ENCODE measurements at regions of chr3 and their contacts with region 1.

Region 1: DNA sequence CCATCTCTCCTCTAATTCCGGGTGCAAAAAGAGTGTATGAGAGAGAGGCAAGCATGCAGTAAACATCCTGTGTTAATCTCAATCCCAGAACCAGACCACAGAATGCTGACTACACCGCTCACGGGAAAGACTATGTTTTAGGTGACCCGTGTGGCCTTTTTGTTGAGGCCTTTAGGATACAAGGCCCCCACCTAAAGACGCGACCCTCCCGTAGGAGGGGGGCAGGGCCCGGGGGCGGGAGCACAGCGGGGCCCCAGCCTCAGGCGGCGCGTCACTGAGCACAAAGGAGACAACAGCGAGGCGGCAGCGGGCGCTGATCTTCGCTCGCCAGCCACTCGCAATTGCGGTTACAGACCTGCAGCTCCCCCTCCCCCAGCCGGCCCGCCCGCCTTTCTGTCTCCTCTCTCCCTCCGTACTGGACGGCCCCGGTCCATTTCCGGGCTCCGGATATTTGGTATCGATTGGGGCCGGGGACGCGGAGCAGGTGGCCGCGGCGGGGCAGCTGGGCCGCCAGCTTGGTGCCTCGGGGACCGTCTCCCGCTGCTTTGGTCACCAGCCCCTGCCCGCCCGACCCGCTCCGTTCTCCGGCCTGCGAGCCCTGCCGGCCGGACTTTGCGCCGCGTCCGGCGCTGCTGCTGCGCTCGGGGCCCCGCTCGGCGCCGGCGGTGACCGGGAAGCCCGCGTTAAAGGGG is at the start of gene CCDC50:
- DNase-seq: peak; percentile 78
- H3K4me3 ChIP-seq: peak within 1 kb of the TSS; percentile 58 to 96 (median 68)
- H3K27ac ChIP-seq: peak within 1 kb of the TSS; percentile 94
- H3K4me1 ChIP-seq: peaks cover 40% of the 10 kb centered on the region
- H3K27me3 ChIP-seq: no peaks in the 10 kb centered on the region
- CTCF ChIP-seq: no peak
- POLR2A ChIP-seq: peak; percentile 64
- total RNA-seq, gene CCDC50: 137 and 153 TPM in 2 replicates

Region 2: DNA sequence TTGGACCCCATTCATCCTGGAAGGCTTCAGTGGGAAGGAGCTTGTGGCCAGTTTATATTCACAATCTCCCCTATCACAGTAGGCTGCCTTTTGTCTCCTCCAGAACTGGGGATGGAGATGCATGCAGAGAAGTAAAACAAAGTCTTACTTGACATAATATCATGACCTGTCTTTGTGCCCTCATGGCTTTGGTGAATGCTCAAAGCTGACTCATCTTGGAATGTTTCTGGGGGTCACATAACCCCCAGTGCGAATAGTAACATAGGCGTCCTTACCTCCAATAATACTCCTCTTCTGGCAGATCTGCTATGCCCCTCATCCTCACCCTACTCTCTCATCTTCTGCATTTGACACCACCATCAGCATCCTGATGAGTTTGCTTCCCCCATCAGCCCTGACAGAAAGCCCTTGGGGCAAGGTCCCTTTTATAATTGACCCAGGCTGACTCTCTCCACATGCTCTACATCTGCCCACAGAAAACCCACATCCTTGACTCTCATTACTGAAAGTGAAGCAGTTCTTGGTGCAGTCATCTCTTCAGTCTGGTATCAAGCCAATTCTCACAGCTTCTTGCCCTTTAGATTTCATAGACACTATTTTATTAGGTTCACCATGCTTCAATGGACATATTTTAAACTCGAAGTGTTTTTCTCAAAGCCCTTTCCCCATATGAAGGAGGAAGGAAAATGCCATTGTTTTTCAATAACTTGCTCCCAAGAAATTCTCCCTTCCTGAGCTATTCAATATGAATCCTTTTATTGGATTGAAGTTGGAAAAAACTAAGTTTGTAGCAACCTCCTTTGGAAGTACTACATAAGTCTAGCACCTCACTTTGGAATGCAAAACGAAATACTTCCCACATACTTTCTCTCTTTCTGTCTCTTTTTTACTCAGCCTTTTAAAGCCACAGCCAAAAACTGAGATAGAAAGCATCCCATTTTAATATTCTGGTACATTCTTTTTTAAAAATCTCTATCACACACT is 93.5 kb before region 1 on chr3:
- CTCF ChIA-PET with region 1: no interaction called
- POLR2A ChIA-PET with region 1: no interaction called
- dilution Hi-C with region 1: no loop called
- intact Hi-C with region 1: loop called (anchors 2 kb)
- DNase-seq: no peak
- H3K4me3 ChIP-seq: no peak overlapping the region
- H3K27ac ChIP-seq: no peak overlapping the region
- H3K4me1 ChIP-seq: peaks cover 42% of the 10 kb centered on the region
- H3K27me3 ChIP-seq: no peaks in the 10 kb centered on the region
- CTCF ChIP-seq: no peak
- POLR2A ChIP-seq: no peak

Region 3: GRCh38 chr3:191301017-191301416 is 28.1 kb before region 1 on chr3:
- CTCF ChIA-PET with region 1: no interaction called
- POLR2A ChIA-PET with region 1: no interaction called
- dilution Hi-C with region 1: no loop called
- intact Hi-C with region 1: no loop called
- DNase-seq: no peak
- H3K4me3 ChIP-seq: no peak overlapping the region
- H3K27ac ChIP-seq: no peak overlapping the region
- H3K4me1 ChIP-seq: no peaks in the 10 kb centered on the region
- H3K27me3 ChIP-seq: no peaks in the 10 kb centered on the region
- CTCF ChIP-seq: no peak
- POLR2A ChIP-seq: no peak

Region 4: GRCh38 chr3:191350396-191351090 is 21.4 kb after region 1 on chr3:
- CTCF ChIA-PET with region 1: interaction called, 3 read pairs
- POLR2A ChIA-PET with region 1: interaction called, 3 read pairs
- dilution Hi-C with region 1: no loop called
- intact Hi-C with region 1: loop called (anchors 1 kb)
- DNase-seq: peak; percentile 75
- H3K4me3 ChIP-seq: peak overlapping the region in 1 of 3 experiments; percentile 39
- H3K27ac ChIP-seq: peak overlapping the region; percentile 73
- H3K4me1 ChIP-seq: peaks cover 71% of the 10 kb centered on the region
- H3K27me3 ChIP-seq: no peaks in the 10 kb centered on the region
- CTCF ChIP-seq: no peak
- POLR2A ChIP-seq: no peak

Region 5: DNA sequence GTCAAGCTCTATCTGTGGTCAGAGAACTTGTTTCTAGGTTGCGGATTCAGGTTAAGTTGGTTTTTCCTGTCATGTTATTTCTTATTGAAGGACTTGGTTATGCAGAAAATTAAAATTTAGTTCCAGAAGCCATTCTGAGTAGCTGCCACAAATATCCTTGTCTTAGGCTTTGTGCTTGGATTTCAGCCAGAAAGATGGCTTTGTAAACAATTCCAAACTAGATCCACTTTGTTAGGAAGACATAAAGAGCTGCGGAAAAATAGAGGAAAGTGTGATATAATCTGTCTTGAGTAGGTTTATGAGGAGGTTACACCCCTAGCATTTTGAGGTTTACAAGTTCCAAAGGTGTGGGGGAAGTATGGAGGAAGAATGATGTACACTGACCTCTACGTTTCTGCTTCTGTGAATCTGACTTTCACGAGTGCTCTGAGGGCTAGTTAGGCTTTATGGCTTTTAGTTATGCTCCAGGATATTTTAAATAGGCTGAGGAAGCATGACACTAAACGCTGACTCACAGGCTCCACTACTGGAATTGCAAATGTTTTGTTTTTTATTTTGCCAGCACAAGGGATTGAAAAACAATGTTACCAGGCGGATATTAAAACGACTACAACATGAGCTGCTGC is 47.5 kb after region 1 on chr3:
- CTCF ChIA-PET with region 1: interaction called, 5 read pairs
- POLR2A ChIA-PET with region 1: no interaction called
- dilution Hi-C with region 1: no loop called
- intact Hi-C with region 1: loop called (anchors 1 kb)
- DNase-seq: peak; percentile 92
- H3K4me3 ChIP-seq: no peak overlapping the region
- H3K27ac ChIP-seq: peak overlapping the region; percentile 73
- H3K4me1 ChIP-seq: peaks cover 39% of the 10 kb centered on the region
- H3K27me3 ChIP-seq: no peaks in the 10 kb centered on the region
- CTCF ChIP-seq: no peak
- POLR2A ChIP-seq: no peak

Measured in endothelial cell of umbilical vein (primary cell).